ENCODE measurements at regions of chr5 and their contacts with region 1.

Region 1: GRCh38 chr5:135191084-135191826 is 157.2 kb upstream of the PITX1 start:
- DNase-seq: peak; percentile 73
- H3K4me3 ChIP-seq: peak overlapping the region in 2 of 3 experiments; percentile 22 to 40
- H3K27ac ChIP-seq: no peak overlapping the region
- H3K4me1 ChIP-seq: peaks cover 17% of the 10 kb centered on the region
- H3K27me3 ChIP-seq: peaks cover 7 to 28% of the 10 kb centered on the region in 2 experiments
- CTCF ChIP-seq: peak; percentile 81 to 98
- POLR2A ChIP-seq: no peak

Region 2: GRCh38 chr5:134904630-134905245 is 286.5 kb before region 1 on chr5 and contains the start of gene PCBD2:
- CTCF ChIA-PET with region 1: interaction called, 4 read pairs
- POLR2A ChIA-PET with region 1: no interaction called
- dilution Hi-C with region 1: no loop called
- intact Hi-C with region 1: loop called (anchors 1 kb)
- DNase-seq: peak; percentile 90
- H3K4me3 ChIP-seq: peak within 1 kb of the TSS; percentile 66 to 71 (median 69)
- H3K27ac ChIP-seq: peak within 1 kb of the TSS; percentile 85
- H3K4me1 ChIP-seq: no peaks in the 10 kb centered on the region
- H3K27me3 ChIP-seq: no peaks in the 10 kb centered on the region
- CTCF ChIP-seq: peak; percentile 95 to 96
- POLR2A ChIP-seq: peak; percentile 79
- total RNA-seq, gene PCBD2: 10.0 and 10.7 TPM in 2 replicates

Region 3: GRCh38 chr5:135016861-135017290 is 174.4 kb before region 1 on chr5:
- CTCF ChIA-PET with region 1: no interaction called
- POLR2A ChIA-PET with region 1: no interaction called
- dilution Hi-C with region 1: no loop called
- intact Hi-C with region 1: no loop called
- DNase-seq: no peak
- H3K4me3 ChIP-seq: no peak overlapping the region
- H3K27ac ChIP-seq: no peak overlapping the region
- H3K4me1 ChIP-seq: no peaks in the 10 kb centered on the region
- H3K27me3 ChIP-seq: peaks cover 4% of the 10 kb centered on the region in 2 experiments
- CTCF ChIP-seq: no peak
- POLR2A ChIP-seq: no peak

Region 4: GRCh38 chr5:135039271-135040045 is 151.8 kb before region 1 on chr5:
- CTCF ChIA-PET with region 1: interaction called, 3 read pairs
- POLR2A ChIA-PET with region 1: no interaction called
- dilution Hi-C with region 1: no loop called
- intact Hi-C with region 1: loop called (anchors 5 kb)
- DNase-seq: no peak
- H3K4me3 ChIP-seq: no peak overlapping the region
- H3K27ac ChIP-seq: no peak overlapping the region
- H3K4me1 ChIP-seq: no peaks in the 10 kb centered on the region
- H3K27me3 ChIP-seq: peaks cover 89 to 94% of the 10 kb centered on the region in 2 experiments
- CTCF ChIP-seq: no peak
- POLR2A ChIP-seq: no peak

Region 5: GRCh38 chr5:135208903-135209721 is 17.9 kb after region 1 on chr5:
- CTCF ChIA-PET with region 1: interaction called, 27 read pairs
- POLR2A ChIA-PET with region 1: interaction called, 3 read pairs
- dilution Hi-C with region 1: no loop called
- intact Hi-C with region 1: loop called (anchors 1 kb)
- DNase-seq: peak; percentile 97
- H3K4me3 ChIP-seq: no peak overlapping the region
- H3K27ac ChIP-seq: peak overlapping the region; percentile 59
- H3K4me1 ChIP-seq: peaks cover 22% of the 10 kb centered on the region
- H3K27me3 ChIP-seq: no peaks in the 10 kb centered on the region
- CTCF ChIP-seq: peak; percentile 43 to 46
- POLR2A ChIP-seq: no peak

Region 6: DNA sequence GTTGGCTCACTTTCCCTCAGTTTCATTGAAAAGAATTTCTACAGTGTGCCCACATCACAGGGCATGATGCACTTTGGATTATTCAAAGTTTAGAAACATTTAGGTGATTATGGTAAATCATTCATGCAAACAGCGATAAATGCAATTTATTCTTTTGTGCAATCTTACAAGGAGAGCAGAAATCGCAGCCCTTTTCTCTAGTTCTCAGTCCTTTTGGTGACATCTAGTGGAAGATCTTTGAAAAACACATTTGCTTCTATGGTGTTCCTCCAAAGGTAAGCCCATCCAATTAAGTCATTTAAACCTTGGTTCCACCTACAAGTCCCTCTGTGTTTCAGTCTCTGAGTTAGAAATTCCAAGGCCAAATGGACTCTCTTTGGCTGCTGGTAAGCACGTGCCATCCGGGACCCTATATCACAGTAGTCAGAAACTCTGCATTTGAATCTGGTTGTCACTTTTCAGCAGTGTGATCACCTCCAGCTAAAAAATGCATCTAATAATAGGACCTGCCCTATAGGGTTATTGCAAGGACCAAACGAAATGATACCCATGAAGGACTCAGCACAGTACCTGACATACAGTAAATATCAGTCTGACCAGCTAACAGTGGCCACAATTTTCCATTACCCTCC is 141.4 kb after region 1 on chr5:
- CTCF ChIA-PET with region 1: interaction called, 5 read pairs
- POLR2A ChIA-PET with region 1: no interaction called
- dilution Hi-C with region 1: no loop called
- intact Hi-C with region 1: loop called (anchors 1 kb)
- DNase-seq: peak; percentile 73
- H3K4me3 ChIP-seq: no peak overlapping the region
- H3K27ac ChIP-seq: no peak overlapping the region
- H3K4me1 ChIP-seq: no peaks in the 10 kb centered on the region
- H3K27me3 ChIP-seq: no peaks in the 10 kb centered on the region
- CTCF ChIP-seq: peak; percentile 33 to 47
- POLR2A ChIP-seq: no peak

Measured in endothelial cell of umbilical vein (primary cell).